ENCODE measurements at regions of chr4 and their contacts with region 1.

Region 1: DNA sequence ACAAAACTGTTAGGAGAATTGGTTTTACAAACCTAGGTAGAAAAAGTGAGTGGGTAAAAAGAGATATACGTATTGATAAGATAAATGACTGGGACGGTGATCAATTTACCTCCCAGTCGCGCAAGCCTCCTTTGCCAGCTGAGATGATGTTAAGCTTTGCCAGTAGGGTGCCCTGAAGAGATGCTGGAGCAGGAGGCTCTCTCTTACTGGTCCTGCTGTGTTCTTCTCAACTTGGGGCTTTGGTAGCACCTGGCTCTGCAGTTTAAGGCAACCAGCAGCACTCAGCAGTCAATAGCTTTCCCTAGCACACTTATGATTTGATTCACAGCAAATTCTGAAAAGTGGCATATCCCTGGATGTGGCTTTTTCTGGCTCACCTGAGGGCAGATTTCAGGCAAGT is 1461.7 kb downstream of the ADGRL3 start:
- DNase-seq: no peak
- ATAC-seq: no peak
- H3K4me3 ChIP-seq: no peak overlapping the region
- H3K27ac ChIP-seq: no peak overlapping the region
- H3K4me1 ChIP-seq: no peaks in the 10 kb centered on the region
- H3K27me3 ChIP-seq: no peaks in the 10 kb centered on the region
- CTCF ChIP-seq: no peak
- EP300 ChIP-seq: no peak
- POLR2A ChIP-seq: no peak
- RAD21 ChIP-seq: no peak

Region 2: DNA sequence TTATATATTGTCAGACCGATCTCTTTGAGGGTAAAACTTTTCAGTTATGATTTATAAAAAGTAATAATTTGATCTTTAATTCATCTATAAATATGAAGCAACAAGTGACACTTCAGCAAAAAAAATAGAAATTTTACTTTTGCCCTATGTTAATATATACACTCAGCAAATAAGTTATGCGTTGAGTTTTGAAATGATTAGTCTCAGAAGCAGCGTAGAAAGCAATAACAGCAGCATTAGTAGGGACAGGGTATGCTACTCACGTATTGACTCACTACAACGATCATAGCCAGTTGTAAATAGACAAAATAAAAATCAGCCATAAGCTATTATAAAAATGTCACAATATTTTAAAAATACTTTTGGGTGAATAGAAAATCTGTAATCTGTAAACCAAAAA is 232.5 kb before region 1 on chr4:
- CTCF ChIA-PET with region 1: no interaction called
- POLR2A ChIA-PET with region 1: no interaction called
- in situ Hi-C with region 1: no loop called
- intact Hi-C with region 1: no loop called
- DNase-seq: no peak
- ATAC-seq: no peak
- H3K4me3 ChIP-seq: no peak overlapping the region
- H3K27ac ChIP-seq: no peak overlapping the region
- H3K4me1 ChIP-seq: no peaks in the 10 kb centered on the region
- H3K27me3 ChIP-seq: no peaks in the 10 kb centered on the region
- CTCF ChIP-seq: no peak
- EP300 ChIP-seq: no peak
- POLR2A ChIP-seq: no peak
- RAD21 ChIP-seq: no peak

Region 3: GRCh38 chr4:62627671-62628070 is 34.1 kb before region 1 on chr4:
- CTCF ChIA-PET with region 1: no interaction called
- POLR2A ChIA-PET with region 1: no interaction called
- in situ Hi-C with region 1: no loop called
- intact Hi-C with region 1: no loop called
- DNase-seq: no peak
- ATAC-seq: no peak
- H3K4me3 ChIP-seq: no peak overlapping the region
- H3K27ac ChIP-seq: no peak overlapping the region
- H3K4me1 ChIP-seq: no peaks in the 10 kb centered on the region
- H3K27me3 ChIP-seq: no peaks in the 10 kb centered on the region
- CTCF ChIP-seq: no peak
- EP300 ChIP-seq: no peak
- POLR2A ChIP-seq: no peak
- RAD21 ChIP-seq: no peak

Region 4: GRCh38 chr4:62683799-62684566 is 22.2 kb after region 1 on chr4:
- CTCF ChIA-PET with region 1: no interaction called
- POLR2A ChIA-PET with region 1: no interaction called
- in situ Hi-C with region 1: no loop called
- intact Hi-C with region 1: no loop called
- DNase-seq: no peak
- ATAC-seq: no peak
- H3K4me3 ChIP-seq: no peak overlapping the region
- H3K27ac ChIP-seq: no peak overlapping the region
- H3K4me1 ChIP-seq: no peaks in the 10 kb centered on the region
- H3K27me3 ChIP-seq: no peaks in the 10 kb centered on the region
- CTCF ChIP-seq: no peak
- EP300 ChIP-seq: no peak
- POLR2A ChIP-seq: no peak
- RAD21 ChIP-seq: no peak

Region 5: GRCh38 chr4:62740296-62740695 is 78.5 kb after region 1 on chr4:
- CTCF ChIA-PET with region 1: no interaction called
- POLR2A ChIA-PET with region 1: no interaction called
- in situ Hi-C with region 1: no loop called
- intact Hi-C with region 1: loop called (anchors 2 kb)
- DNase-seq: no peak
- ATAC-seq: no peak
- H3K4me3 ChIP-seq: no peak overlapping the region
- H3K27ac ChIP-seq: no peak overlapping the region
- H3K4me1 ChIP-seq: no peaks in the 10 kb centered on the region
- H3K27me3 ChIP-seq: no peaks in the 10 kb centered on the region
- CTCF ChIP-seq: no peak
- EP300 ChIP-seq: no peak
- POLR2A ChIP-seq: no peak
- RAD21 ChIP-seq: no peak

Measured in HepG2 (cell line).